ENCODE measurements at regions of chr20 and their contacts with region 1.

Region 1: DNA sequence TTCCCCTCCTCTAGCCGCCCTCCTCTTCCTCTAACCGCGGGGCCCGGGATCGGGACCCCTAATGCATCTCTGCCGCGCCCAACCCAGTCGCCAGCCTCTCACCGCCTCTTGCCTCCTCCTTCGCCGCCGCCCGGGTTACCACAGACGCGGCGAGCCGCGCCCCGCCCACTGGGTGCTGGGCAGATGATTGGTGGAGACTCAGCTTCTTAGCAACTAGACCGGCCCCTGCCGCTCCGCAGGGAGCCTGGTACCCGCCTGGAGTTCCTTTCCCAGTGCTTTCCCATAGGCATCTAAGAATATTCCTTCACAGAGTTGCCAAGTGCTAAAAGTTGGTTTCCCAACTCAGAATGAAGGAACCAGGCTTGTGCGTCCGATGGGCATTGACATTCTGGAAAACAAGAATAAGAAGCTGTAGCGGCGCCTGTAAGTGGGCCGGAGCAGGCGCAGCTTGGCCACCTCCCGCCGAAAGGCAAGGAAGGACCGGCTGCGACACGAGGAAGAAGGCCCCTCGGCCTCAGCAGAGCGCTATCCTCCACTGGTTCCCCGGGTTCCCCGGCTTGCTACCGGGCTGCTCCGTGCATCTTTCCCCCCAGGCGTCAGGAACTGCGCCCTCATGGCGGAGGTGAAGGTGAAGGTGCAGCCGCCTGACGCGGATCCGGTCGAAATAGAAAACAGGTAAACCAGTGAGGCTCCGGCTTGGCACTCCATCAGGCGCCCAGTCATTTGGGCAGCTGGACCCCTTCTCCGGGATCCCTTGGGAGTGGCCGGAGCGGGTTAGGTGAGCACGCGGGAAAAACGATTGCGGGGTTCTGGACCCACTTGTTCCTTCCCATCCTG is at the starts of genes DZANK1 and POLR3F:
- DNase-seq: peak; percentile 83 to 94
- ATAC-seq: peak; percentile 99 to 100
- H3K4me3 ChIP-seq: peak within 1 kb of the TSS; percentile 75 to 98 (median 91)
- H3K27ac ChIP-seq: peak within 1 kb of the TSS; percentile 77 to 93 (median 85)
- H3K4me1 ChIP-seq: peaks cover 19 to 21% of the 10 kb centered on the region in 2 donors
- H3K27me3 ChIP-seq: no peaks in the 10 kb centered on the region
- CTCF ChIP-seq: no peak
- POLR2A ChIP-seq: peak in 1 of 2 donors; percentile 37
- total RNA-seq, gene DZANK1: 0.18 to 1.0 (median 0.62) TPM
- total RNA-seq, gene POLR3F: 6.0 to 8.7 (median 6.8) TPM

Region 2: DNA sequence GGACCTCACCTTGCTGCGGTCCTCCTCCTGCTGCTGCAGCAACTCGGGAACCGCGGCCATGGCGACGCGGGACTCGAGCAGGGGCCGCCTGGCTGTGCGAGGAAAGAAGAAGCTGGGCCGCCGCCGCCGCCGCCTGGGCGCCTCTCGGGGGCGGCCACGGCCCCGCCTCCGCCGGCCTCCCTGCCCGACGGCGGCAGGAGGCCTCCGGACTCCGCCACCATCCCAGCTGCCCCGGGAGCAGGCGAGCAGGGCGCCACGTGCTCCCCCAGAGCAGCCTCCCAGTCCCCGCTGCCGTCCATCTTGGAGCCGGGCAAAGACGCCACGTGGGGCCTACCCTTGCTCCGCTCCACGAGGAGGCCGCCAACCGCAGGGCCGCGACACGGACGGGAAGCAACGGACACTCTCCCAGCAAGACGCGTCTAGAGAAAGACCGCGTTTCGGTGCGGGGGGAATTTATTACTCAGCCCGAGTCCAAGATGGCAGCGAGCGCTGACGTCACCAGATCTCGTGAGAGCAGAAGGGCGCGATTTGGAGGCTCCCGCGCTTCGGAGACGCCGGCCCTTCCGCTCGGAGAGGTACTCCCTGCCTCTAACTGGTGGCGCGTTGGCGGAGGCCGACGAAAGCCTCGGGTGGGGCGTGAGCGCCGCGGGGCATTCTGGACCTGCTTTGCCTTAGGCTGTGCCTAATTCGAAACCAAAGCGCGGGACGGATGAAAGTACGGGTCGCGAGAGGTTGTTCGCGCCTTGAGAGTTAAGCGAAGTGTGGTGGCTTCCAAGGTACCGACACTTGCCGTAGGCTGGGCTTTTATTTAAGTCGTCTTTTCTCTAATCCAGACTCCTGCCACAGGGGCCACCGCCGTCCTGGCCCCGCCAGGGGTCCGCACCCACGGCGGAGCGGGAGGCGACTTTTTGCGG is 498.5 kb before region 1 on chr20 and contains the starts of genes MGME1 and SNX5:
- in situ Hi-C with region 1: no loop called
- intact Hi-C with region 1: loop called (anchors 10 kb)
- DNase-seq: peak; percentile 99
- ATAC-seq: peak; percentile 82 to 85
- H3K4me3 ChIP-seq: peak within 1 kb of the TSS; percentile 91 to 97 (median 94)
- H3K27ac ChIP-seq: peak within 1 kb of the TSS; percentile 93 to 99 (median 96)
- H3K4me1 ChIP-seq: peaks cover 75 to 76% of the 10 kb centered on the region in 2 donors
- H3K27me3 ChIP-seq: no peaks in the 10 kb centered on the region
- CTCF ChIP-seq: no peak
- POLR2A ChIP-seq: peak; percentile 55 to 68
- total RNA-seq, gene MGME1: 5.2 to 9.1 (median 7.2) TPM
- total RNA-seq, gene SNX5: 49.8 to 88.8 (median 60.9) TPM

Region 3: DNA sequence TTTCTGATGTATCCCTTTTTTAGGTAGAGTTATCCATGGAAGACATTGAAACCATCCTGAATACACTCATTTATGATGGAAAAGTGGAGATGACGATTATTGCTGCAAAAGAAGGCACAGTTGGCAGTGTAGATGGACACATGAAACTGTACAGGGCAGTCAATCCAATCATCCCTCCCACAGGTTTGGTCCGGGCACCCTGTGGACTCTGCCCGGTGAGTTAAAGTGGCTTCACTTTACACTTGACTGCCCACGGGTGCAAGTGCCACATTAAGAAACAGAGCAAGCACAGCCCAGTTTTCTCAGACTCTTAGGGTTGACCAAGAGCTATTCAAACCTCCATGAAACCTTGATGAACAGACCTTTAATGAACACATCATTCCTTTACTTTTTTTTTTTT is 14.5 kb after region 1 on chr20:
- in situ Hi-C with region 1: no loop called
- intact Hi-C with region 1: loop called (anchors 1 kb)
- DNase-seq: no peak
- ATAC-seq: no peak
- H3K4me3 ChIP-seq: no peak overlapping the region
- H3K27ac ChIP-seq: no peak overlapping the region
- H3K4me1 ChIP-seq: no peaks in the 10 kb centered on the region
- H3K27me3 ChIP-seq: no peaks in the 10 kb centered on the region
- CTCF ChIP-seq: no peak
- POLR2A ChIP-seq: no peak

Region 4: GRCh38 chr20:19275630-19276072 is 808.5 kb after region 1 on chr20:
- in situ Hi-C with region 1: no loop called
- intact Hi-C with region 1: no loop called
- DNase-seq: peak; percentile 38 to 49
- ATAC-seq: peak; percentile 68 to 77
- H3K4me3 ChIP-seq: no peak overlapping the region
- H3K27ac ChIP-seq: peak overlapping the region; percentile 51 to 73 (median 61)
- H3K4me1 ChIP-seq: peaks cover 13 to 21% of the 10 kb centered on the region in 2 donors
- H3K27me3 ChIP-seq: no peaks in the 10 kb centered on the region
- CTCF ChIP-seq: no peak
- POLR2A ChIP-seq: no peak

Measured in gastrocnemius medialis (tissue), 4 donors.